IMR-90 (cell line): ENCODE measurements at regions of chr6 and their contacts with region 1.

Region 1: GRCh38 chr6:155327326-155328073 is 13.2 kb upstream of the TFB1M start:
- DNase-seq: peak; percentile 78
- ATAC-seq: peak; percentile 92
- H3K4me3 ChIP-seq: no peak overlapping the region
- H3K27ac ChIP-seq: peak overlapping the region; percentile 83
- H3K4me1 ChIP-seq: peaks cover 7% of the 10 kb centered on the region; the same call in 1 of the 2 replicates
- H3K27me3 ChIP-seq: no peaks in the 10 kb centered on the region
- CTCF ChIP-seq: peak; percentile 91
- POLR2A ChIP-seq: no peak
- RAD21 ChIP-seq: peak; percentile 89

Region 2: DNA sequence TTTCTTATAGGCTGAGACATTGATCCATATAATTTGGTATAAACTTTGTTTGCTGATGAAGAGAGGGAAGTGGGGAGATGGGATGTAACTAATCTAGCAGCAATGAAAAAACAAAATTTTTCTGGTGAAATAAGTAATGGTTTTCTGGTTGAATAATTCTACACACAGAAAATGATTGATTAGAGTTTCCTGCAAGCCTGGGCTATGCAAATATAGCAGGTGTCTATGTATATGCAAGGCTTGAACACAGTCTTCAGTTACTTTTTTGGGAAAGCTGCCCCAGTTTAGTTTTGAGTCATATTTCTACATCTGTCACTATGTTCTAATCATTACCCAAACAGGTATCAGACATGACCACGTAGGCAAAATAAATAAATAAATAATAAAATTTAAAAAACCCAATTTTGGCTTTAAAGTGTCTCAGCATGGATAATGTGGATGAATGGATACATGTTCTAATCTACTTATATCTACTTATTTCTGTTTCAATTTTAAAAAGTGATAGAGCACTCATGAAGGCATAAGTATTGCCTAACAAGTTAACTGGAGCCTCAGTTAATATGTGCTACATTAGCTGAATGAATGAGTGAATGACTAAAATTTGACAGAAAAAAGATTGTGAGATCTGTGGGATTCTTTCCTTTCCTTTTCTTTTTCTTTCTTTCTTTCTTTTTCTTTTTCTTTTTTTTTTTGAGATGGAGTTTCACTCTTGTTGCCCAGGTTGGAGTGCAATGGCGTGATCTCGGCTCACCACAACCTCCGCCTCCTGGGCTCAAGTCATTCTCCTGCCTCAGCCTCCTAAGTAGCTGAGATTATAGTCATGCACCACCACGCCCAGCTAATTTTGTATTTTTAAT is 24.0 kb after region 1 on chr6:
- CTCF ChIA-PET with region 1: no interaction called
- POLR2A ChIA-PET with region 1: no interaction called
- dilution Hi-C with region 1: no loop called
- in situ Hi-C with region 1: no loop called
- intact Hi-C with region 1: no loop called
- DNase-seq: no peak
- ATAC-seq: no peak
- H3K4me3 ChIP-seq: no peak overlapping the region
- H3K27ac ChIP-seq: no peak overlapping the region
- H3K4me1 ChIP-seq: 0 out of 2 replicates have a peak, but pooled peaks cover 2% of the 10 kb centered on the region
- H3K27me3 ChIP-seq: no peaks in the 10 kb centered on the region
- CTCF ChIP-seq: no peak
- POLR2A ChIP-seq: no peak
- RAD21 ChIP-seq: no peak

Region 3: GRCh38 chr6:155530219-155530834 is 202.8 kb after region 1 on chr6:
- CTCF ChIA-PET with region 1: no interaction called
- POLR2A ChIA-PET with region 1: no interaction called
- dilution Hi-C with region 1: no loop called
- in situ Hi-C with region 1: loop called (anchors 10 kb)
- intact Hi-C with region 1: loop called (anchors 1 kb)
- DNase-seq: peak; percentile 60
- ATAC-seq: peak; percentile 54
- H3K4me3 ChIP-seq: no peak overlapping the region
- H3K27ac ChIP-seq: peak overlapping the region; percentile 50; the same call in 1 of the 2 replicates
- H3K4me1 ChIP-seq: 0 out of 2 replicates have a peak, but pooled peaks cover 2% of the 10 kb centered on the region
- H3K27me3 ChIP-seq: no peaks in the 10 kb centered on the region
- CTCF ChIP-seq: peak; percentile 71
- POLR2A ChIP-seq: no peak
- RAD21 ChIP-seq: peak; percentile 81

Region 4: DNA sequence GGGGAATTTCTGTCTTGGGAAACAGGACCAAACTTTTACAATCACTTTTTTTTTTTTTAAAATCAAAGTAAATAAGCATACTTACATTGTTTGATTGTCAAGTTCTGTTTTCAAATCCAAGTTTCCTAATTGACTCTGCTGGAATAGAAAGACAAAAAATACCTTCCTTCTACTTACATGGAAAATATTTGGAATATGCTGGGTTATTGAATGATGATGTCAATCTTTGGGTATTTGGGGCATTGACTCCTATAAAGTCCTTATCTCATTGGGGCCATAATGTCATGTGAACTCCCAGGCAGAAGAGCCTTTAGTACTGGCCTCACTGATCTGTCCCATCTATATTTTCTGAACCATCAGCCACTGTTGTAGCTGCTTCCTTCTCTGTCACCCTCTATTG is 250.8 kb after region 1 on chr6:
- CTCF ChIA-PET with region 1: no interaction called
- POLR2A ChIA-PET with region 1: no interaction called
- dilution Hi-C with region 1: no loop called
- in situ Hi-C with region 1: no loop called
- intact Hi-C with region 1: no loop called
- DNase-seq: peak; percentile 4
- ATAC-seq: no peak; the same call in 1 of the 2 replicates
- H3K4me3 ChIP-seq: no peak overlapping the region
- H3K27ac ChIP-seq: no peak overlapping the region
- H3K4me1 ChIP-seq: no peaks in the 10 kb centered on the region
- H3K27me3 ChIP-seq: no peaks in the 10 kb centered on the region
- CTCF ChIP-seq: no peak
- POLR2A ChIP-seq: no peak
- RAD21 ChIP-seq: no peak

Region 5: DNA sequence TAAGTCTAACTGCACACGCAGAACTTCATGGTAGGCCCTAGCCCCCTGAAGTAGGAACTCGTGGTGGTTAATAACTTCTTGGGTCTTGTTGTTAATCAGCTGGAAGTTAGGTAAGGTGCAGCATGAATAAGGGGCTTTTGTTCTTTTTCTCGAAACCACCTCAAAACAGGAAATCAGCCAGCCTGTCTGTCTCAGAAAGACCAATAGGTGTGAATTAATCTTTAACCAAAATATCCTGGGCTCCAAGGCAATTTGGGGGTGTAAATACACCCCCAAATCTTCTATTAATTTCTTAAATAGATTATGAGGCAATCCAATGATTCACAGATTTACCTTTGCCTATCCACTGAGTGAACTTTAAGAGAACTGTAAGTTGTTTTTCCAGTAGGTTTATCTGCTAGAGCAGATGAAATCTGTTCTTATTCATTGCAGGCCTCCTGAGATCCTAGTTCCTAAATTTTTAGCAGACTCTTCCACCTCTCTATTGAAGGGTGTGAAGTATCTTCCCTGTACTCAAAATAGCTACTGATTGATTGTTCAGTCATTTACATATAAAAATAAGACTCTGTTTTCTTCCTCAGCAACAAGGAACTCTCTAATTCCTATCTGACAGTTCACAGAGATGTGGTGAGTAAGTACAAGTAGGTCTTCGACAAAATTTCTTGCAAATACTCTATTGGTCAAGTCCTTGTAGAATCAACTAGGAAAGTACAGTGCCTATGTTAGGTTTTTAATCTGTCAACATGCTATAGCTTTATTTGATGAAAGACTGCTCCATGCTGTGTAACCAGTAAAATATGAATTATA is 555.2 kb after region 1 on chr6:
- CTCF ChIA-PET with region 1: no interaction called
- POLR2A ChIA-PET with region 1: no interaction called
- dilution Hi-C with region 1: no loop called
- in situ Hi-C with region 1: no loop called
- intact Hi-C with region 1: loop called (anchors 10 kb)
- DNase-seq: peak; percentile 21
- ATAC-seq: peak; percentile 5; the same call in 1 of the 2 replicates
- H3K4me3 ChIP-seq: no peak overlapping the region
- H3K27ac ChIP-seq: peak overlapping the region; percentile 83
- H3K4me1 ChIP-seq: peaks cover 22% of the 10 kb centered on the region
- H3K27me3 ChIP-seq: no peaks in the 10 kb centered on the region
- CTCF ChIP-seq: no peak
- POLR2A ChIP-seq: no peak
- RAD21 ChIP-seq: no peak

Region 6: GRCh38 chr6:156175971-156176421 is 848.5 kb after region 1 on chr6:
- CTCF ChIA-PET with region 1: no interaction called
- POLR2A ChIA-PET with region 1: no interaction called
- dilution Hi-C with region 1: no loop called
- in situ Hi-C with region 1: no loop called
- intact Hi-C with region 1: no loop called
- DNase-seq: no peak
- ATAC-seq: no peak
- H3K4me3 ChIP-seq: no peak overlapping the region
- H3K27ac ChIP-seq: no peak overlapping the region
- H3K4me1 ChIP-seq: no peaks in the 10 kb centered on the region
- H3K27me3 ChIP-seq: no peaks in the 10 kb centered on the region
- CTCF ChIP-seq: 0 out of 2 replicates have a peak, but pooled peaks have one; percentile 8
- POLR2A ChIP-seq: no peak
- RAD21 ChIP-seq: no peak

Region 7: DNA sequence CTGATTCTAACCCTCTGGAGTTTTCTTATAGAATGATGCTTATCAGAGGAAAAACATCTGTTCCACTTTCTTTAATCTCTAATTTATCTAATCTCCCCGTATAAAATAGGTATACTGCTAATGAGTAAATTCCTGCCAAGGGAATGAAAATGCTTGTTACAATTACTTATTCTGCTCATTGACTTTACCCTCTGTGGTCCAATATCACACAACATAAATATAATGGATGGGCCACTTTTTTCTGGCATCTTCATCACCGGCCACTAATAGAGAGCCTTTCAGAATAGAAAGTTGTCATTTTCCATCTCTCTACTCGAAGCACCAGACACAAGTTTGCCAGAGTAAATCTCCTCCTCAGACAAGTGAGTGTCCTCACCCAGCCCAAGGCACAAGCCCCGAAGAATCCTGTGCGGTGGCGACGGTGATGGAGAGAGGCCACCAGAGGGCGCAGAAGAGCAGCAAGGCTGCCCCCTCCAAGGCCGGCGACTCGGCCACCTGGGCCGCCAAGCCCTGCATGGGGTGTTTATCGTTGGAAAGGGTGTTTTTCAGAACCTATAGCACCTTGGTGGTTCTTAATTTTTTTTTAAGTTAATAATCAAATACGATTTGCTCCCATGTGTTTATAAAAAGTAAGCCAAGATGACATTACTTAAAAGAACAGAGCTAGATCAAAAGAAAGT is 1236.8 kb after region 1 on chr6:
- CTCF ChIA-PET with region 1: no interaction called
- POLR2A ChIA-PET with region 1: no interaction called
- dilution Hi-C with region 1: no loop called
- in situ Hi-C with region 1: loop called (anchors 25 kb)
- intact Hi-C with region 1: loop called (anchors 10 kb)
- DNase-seq: peak; percentile 53
- ATAC-seq: peak; percentile 99
- H3K4me3 ChIP-seq: no peak overlapping the region
- H3K27ac ChIP-seq: no peak overlapping the region
- H3K4me1 ChIP-seq: no peaks in the 10 kb centered on the region
- H3K27me3 ChIP-seq: peaks cover 5% of the 10 kb centered on the region
- CTCF ChIP-seq: peak; percentile 88
- POLR2A ChIP-seq: no peak
- RAD21 ChIP-seq: peak; percentile 89

Region 8: DNA sequence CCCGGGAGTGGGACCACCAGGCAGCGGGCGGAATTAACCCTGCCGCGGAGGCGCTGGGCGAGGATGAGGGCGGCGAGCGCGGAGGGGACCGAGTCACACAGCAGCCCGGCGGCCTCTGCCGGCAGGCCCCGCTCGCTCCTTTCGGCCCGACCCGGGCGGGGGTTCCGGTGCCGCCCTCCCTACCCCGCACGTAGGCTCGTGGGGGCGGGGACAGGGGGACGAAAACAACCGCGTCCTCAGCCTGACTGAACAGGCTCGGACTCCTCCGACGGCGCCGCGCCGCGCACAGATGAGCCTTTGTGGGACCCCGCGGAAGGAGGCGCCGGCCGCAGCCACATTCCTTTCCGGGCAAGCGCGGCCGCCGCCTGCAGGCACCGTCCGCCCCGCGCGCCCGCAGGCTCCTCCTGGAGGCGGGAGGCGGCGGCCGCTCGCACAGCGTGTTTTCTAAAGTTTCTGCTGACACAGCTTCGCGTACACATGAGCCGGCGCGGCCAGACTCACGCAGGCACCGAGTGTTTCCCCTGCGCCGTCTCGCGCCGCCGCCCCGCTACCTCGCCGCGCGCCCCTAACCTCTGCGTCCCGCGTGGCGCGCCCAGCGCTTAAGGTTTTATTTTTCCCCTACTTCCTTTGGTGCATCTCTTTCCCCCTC is 1694.0 kb after region 1 on chr6:
- CTCF ChIA-PET with region 1: no interaction called
- POLR2A ChIA-PET with region 1: no interaction called
- dilution Hi-C with region 1: no loop called
- in situ Hi-C with region 1: loop called (anchors 25 kb)
- intact Hi-C with region 1: loop called (anchors 10 kb)
- DNase-seq: peak; percentile 81
- ATAC-seq: peak; percentile 78
- H3K4me3 ChIP-seq: peak overlapping the region; percentile 64
- H3K27ac ChIP-seq: peak overlapping the region; percentile 98
- H3K4me1 ChIP-seq: peaks cover 12% of the 10 kb centered on the region
- H3K27me3 ChIP-seq: no peaks in the 10 kb centered on the region
- CTCF ChIP-seq: peak; percentile 52
- POLR2A ChIP-seq: peak; percentile 95
- RAD21 ChIP-seq: peak; percentile 25; the same call in 1 of the 2 replicates

Region 9: GRCh38 chr6:157274471-157275226 is 1947.1 kb after region 1 on chr6:
- CTCF ChIA-PET with region 1: no interaction called
- POLR2A ChIA-PET with region 1: no interaction called
- dilution Hi-C with region 1: no loop called
- in situ Hi-C with region 1: no loop called
- intact Hi-C with region 1: loop called (anchors 2 kb)
- DNase-seq: peak; percentile 57
- ATAC-seq: peak; percentile 99
- H3K4me3 ChIP-seq: peak overlapping the region; percentile 90
- H3K27ac ChIP-seq: peak overlapping the region; percentile 79
- H3K4me1 ChIP-seq: peaks cover 3% of the 10 kb centered on the region
- H3K27me3 ChIP-seq: no peaks in the 10 kb centered on the region
- CTCF ChIP-seq: peak; percentile 85
- POLR2A ChIP-seq: peak; percentile 67
- RAD21 ChIP-seq: peak; percentile 78